ENCODE measurements at regions of chr14 and their contacts with region 1.

Region 1: GRCh38 chr14:70714055-70714621 is 72.4 kb downstream of the TTC9 start:
- DNase-seq: peak in 3 of 5 donors; percentile 37 to 41 (median 38)
- ATAC-seq: peak in 1 of 4 donors; percentile 29
- H3K4me3 ChIP-seq: peak overlapping the region in 1 of 12 donors; percentile 15
- H3K27ac ChIP-seq: peak overlapping the region in 2 of 12 donors; percentile 35 to 37
- H3K4me1 ChIP-seq: peaks cover 0 to 16% (median 7%) of the 10 kb centered on the region in 12 donors
- H3K27me3 ChIP-seq: peaks cover 0 to 9% (median 0%) of the 10 kb centered on the region in 9 donors
- CTCF ChIP-seq: peak; percentile 61 to 80 (median 70)
- POLR2A ChIP-seq: no peak

Region 2: DNA sequence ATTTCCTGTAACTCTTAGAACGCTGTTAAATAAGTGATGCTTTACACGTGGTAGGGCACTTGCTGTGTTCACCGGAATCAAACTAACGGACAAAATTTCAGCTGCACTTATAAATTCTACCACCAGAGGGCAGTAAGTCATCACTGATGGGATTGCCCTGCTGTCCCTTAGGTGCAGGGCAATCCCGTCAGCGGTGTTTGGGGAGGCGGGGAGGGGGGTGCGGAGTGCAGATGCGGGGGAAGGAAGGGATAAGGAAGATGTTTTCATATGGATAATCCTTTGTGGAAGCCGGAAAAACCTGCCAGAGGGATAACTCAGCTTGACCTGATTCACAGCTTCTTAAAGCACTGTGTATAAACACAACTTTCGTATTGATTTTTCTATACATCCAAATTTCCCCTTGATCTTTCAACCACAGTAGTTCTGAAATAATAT is 895.4 kb before region 1 on chr14:
- intact Hi-C with region 1: loop called in 1 of 10 experiments (anchors 5 kb)
- DNase-seq: peak in 3 of 5 donors; percentile 22 to 45 (median 32)
- ATAC-seq: peak in 3 of 4 donors; percentile 64 to 76 (median 73)
- H3K4me3 ChIP-seq: no peak overlapping the region
- H3K27ac ChIP-seq: no peak overlapping the region
- H3K4me1 ChIP-seq: peaks cover 0 to 4% (median 0%) of the 10 kb centered on the region in 12 donors
- H3K27me3 ChIP-seq: peaks cover 0 to 33% (median 12%) of the 10 kb centered on the region in 9 donors
- CTCF ChIP-seq: peak; percentile 72 to 88 (median 83)
- POLR2A ChIP-seq: no peak

Region 3: DNA sequence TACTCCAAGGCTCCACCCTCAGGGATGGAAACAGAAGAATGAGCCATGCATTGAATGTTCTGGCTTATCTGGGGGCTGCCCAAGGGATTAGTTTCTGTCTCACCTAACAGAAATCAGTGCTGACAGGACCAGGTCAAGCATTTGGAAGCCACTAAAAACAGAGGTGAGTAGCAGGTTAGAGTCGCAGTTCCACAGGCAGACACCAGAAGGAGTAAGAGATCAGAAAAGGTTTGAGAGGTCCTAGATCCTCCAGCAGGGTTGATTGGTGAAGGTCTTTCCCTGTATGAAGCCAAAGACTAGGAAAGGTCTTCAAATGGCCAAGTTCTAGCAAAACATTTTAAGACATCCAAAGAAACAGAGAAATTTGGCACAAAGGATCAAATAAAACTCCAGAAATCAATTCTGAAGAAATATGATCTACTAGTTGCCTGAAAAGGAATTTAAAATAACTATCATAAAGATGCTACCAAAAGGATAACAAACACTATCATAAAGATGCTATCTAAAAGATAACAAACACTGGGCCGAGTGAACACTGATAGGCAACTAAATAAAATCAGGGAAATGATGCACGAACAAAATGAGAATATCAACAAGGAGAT is 91.9 kb before region 1 on chr14:
- intact Hi-C with region 1: loop called (anchors 1 to 5 kb)
- DNase-seq: no peak
- ATAC-seq: peak in 3 of 4 donors; percentile 47 to 77 (median 56)
- H3K4me3 ChIP-seq: no peak overlapping the region
- H3K27ac ChIP-seq: no peak overlapping the region
- H3K4me1 ChIP-seq: peaks cover 0 to 7% (median 0%) of the 10 kb centered on the region in 12 donors
- H3K27me3 ChIP-seq: no peaks in the 10 kb centered on the region
- CTCF ChIP-seq: peak; percentile 45 to 70 (median 62)
- POLR2A ChIP-seq: no peak

Region 4: GRCh38 chr14:70655110-70655826 is 58.9 kb before region 1 on chr14:
- intact Hi-C with region 1: no loop called
- DNase-seq: no peak
- ATAC-seq: peak in 1 of 4 donors; percentile 56
- H3K4me3 ChIP-seq: no peak overlapping the region
- H3K27ac ChIP-seq: peak overlapping the region in 1 of 12 donors; percentile 49
- H3K4me1 ChIP-seq: peaks cover 0 to 5% (median 0%) of the 10 kb centered on the region in 12 donors
- H3K27me3 ChIP-seq: no peaks in the 10 kb centered on the region
- CTCF ChIP-seq: no peak
- POLR2A ChIP-seq: no peak

Region 5: DNA sequence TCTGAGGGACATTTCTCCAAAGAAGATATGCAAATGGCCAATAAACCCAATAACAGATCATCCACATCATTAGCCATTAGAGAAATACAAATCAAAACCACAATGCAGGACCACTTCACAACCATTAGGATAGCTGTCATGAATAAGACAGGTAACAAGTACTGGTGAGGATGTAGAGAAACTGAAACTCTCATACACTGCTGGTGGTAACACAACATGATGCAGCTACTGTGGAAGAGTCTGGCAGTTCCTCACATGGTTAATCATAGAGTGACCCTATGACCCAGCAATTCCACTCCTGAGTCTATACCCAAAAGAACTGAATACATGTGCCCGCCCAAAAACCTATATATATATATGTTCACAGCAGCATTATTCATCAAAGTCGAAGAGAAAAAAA is 33.4 kb before region 1 on chr14:
- intact Hi-C with region 1: no loop called
- DNase-seq: no peak
- ATAC-seq: no peak
- H3K4me3 ChIP-seq: no peak overlapping the region
- H3K27ac ChIP-seq: no peak overlapping the region
- H3K4me1 ChIP-seq: no peaks in the 10 kb centered on the region
- H3K27me3 ChIP-seq: no peaks in the 10 kb centered on the region
- CTCF ChIP-seq: no peak
- POLR2A ChIP-seq: no peak

Region 6: GRCh38 chr14:70809543-70810244 is 95.6 kb after region 1 on chr14:
- intact Hi-C with region 1: loop called in 1 of 10 experiments (anchors 10 kb)
- DNase-seq: peak; percentile 84 to 93 (median 91)
- ATAC-seq: peak; percentile 98
- H3K4me3 ChIP-seq: peak overlapping the region; percentile 38 to 94 (median 74)
- H3K27ac ChIP-seq: peak overlapping the region in 6 of 12 donors; percentile 24 to 75 (median 51)
- H3K4me1 ChIP-seq: peaks cover 0 to 22% (median 6%) of the 10 kb centered on the region in 12 donors
- H3K27me3 ChIP-seq: peaks cover 0 to 34% (median 20%) of the 10 kb centered on the region in 9 donors
- CTCF ChIP-seq: no peak
- POLR2A ChIP-seq: peak in 1 of 2 donors; percentile 14

Region 7: DNA sequence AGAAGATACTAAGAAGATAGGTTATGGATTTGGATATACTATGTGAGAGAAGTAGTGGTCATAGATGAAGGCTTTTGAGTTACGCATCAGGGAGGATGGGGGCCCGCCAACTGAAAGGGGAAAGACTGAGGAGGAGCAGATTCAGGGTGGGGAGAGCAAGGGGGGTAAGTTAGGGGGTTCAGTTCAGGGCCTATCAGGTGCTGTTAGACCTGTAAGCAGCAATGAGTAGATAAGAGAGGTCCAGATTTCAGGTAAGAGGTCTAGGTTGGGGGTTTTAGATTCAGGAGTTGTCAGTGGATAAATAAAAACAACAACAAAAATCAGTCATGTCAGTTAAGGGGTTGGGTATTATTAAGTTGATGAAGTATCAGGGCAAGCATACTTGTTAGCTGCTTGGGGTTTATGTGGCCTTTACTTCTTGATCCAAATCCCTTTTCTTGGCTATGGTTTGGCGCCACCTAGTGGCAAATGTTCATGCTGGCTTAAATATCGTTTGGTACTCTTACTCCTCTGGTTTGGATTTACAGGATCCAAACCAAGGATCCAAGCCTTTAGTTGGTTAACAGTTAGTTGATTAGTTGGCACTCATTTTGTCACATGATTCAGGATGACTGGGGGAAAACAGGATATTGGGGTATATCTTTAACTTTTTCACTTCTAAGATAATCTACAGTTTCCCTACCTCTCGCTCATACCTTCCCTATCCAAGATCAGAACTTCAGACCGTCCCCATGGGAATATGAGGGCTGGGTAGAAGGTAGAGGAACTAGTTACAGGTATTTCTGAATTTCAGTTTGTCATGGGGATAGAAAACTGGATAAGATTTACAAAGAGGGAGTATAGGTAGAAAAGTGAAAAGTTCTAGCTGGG is 258.2 kb after region 1 on chr14:
- intact Hi-C with region 1: loop called in 2 of 10 experiments (anchors 10 kb)
- DNase-seq: peak; percentile 64 to 84 (median 81)
- ATAC-seq: peak; percentile 60 to 89 (median 87)
- H3K4me3 ChIP-seq: no peak overlapping the region
- H3K27ac ChIP-seq: no peak overlapping the region
- H3K4me1 ChIP-seq: peaks cover 0 to 15% (median 4%) of the 10 kb centered on the region in 12 donors
- H3K27me3 ChIP-seq: no peaks in the 10 kb centered on the region
- CTCF ChIP-seq: peak; percentile 88 to 98 (median 94)
- POLR2A ChIP-seq: no peak